HAP-1 (cell line): ENCODE measurements at regions of chr18 and their contacts with region 1.

Region 1: GRCh38 chr18:12726774-12727550 is 24.1 kb downstream of the PSMG2 start:
- DNase-seq: peak; percentile 61 to 87
- H3K4me3 ChIP-seq: no peak overlapping the region
- H3K4me1 ChIP-seq: peaks cover 9% of the 10 kb centered on the region
- H3K27me3 ChIP-seq: no peaks in the 10 kb centered on the region

Region 2: GRCh38 chr18:12934454-12935071 is 207.6 kb after region 1 on chr18:
- in situ Hi-C with region 1: loop called (anchors 5 kb)
- DNase-seq: peak; percentile 75 to 87
- H3K4me3 ChIP-seq: no peak overlapping the region
- H3K4me1 ChIP-seq: peaks cover 3% of the 10 kb centered on the region; the same call in 1 of the 2 replicates
- H3K27me3 ChIP-seq: no peaks in the 10 kb centered on the region

Region 3: DNA sequence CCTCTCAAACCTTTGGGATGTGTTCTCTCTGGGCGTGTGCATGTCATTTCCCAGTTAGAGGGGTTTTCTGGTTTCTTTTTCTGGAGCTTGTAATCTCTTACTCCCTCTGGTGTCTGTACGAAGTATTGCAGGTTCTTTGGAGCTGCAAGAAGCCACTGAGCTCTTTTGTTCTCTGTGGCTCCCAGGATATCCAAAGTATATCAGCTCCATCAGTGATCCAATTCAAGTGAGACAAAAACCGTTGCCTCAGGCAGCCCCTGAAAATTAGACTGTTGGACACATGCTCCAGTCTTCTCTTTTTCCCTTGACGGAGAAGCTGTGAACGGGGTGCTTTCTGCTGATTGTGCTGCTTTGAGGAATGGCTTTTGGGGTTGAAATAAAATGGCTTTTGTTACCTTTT is 432.6 kb after region 1 on chr18:
- in situ Hi-C with region 1: loop called (anchors 25 kb)
- DNase-seq: peak; percentile 63 to 72
- H3K4me3 ChIP-seq: no peak overlapping the region
- H3K4me1 ChIP-seq: no peaks in the 10 kb centered on the region
- H3K27me3 ChIP-seq: no peaks in the 10 kb centered on the region